ENCODE measurements at regions of chr15 and their contacts with region 1.

Region 1: DNA sequence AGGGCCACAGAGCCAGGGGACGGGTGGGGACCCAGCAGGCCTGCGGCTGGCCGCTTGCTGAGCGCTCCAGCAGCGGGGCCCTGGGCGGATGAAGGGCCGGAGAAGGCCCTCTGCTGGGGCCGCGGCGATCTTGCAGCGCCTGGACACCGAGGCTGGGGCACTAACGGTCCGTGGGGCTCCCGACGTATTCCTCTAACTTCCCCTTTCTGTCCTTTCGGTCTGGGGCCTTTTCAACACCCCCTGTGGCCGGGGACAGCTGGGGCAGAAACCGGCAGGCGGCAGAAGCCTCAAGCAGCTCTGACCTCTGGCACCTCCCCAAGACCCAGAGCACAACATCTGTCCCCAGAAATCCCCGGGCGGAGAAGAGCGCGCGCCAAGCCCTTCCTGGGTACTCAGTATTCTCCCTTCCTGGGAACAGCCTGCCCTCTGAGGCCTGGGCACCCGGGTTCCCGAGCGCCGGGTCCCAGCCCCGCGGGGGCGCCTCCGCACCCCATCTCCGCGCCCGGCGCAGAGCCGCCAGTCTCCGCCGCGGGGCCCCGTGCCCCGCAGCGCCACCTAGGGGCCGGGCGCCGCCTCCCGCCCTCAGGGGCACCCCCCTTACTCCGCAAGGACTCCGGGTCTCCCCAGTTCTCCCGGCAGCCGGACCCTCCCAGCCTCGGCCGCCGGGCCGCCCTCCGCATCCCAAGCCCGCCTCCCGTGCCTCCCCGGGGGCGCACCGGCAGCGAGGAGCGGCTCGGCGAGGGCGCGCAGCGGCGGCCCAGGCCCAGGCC is 582 bp upstream of the SLCO3A1 start:
- DNase-seq: peak; percentile 80
- H3K4me3 Mint-ChIP-seq: peak overlapping the region; percentile 77
- H3K27ac Mint-ChIP-seq: peak overlapping the region; percentile 77
- H3K4me1 Mint-ChIP-seq: peaks cover 58% of the 10 kb centered on the region
- H3K27me3 Mint-ChIP-seq: no peaks in the 10 kb centered on the region

Region 2: GRCh38 chr15:91302588-91303439 is 550.1 kb before region 1 on chr15:
- CTCF ChIA-PET with region 1: interaction called, 22 read pairs
- POLR2A ChIA-PET with region 1: no interaction called
- intact Hi-C with region 1: loop called (anchors 2 kb)
- DNase-seq: peak; percentile 28
- H3K4me3 Mint-ChIP-seq: no peak overlapping the region
- H3K27ac Mint-ChIP-seq: no peak overlapping the region
- H3K4me1 Mint-ChIP-seq: peaks cover 21% of the 10 kb centered on the region
- H3K27me3 Mint-ChIP-seq: peaks cover 10% of the 10 kb centered on the region

Region 3: GRCh38 chr15:91469632-91470567 is 383.0 kb before region 1 on chr15:
- CTCF ChIA-PET with region 1: interaction called, 4 read pairs
- POLR2A ChIA-PET with region 1: no interaction called
- intact Hi-C with region 1: loop called (anchors 1 kb)
- DNase-seq: peak; percentile 87
- H3K4me3 Mint-ChIP-seq: peak overlapping the region; percentile 27
- H3K27ac Mint-ChIP-seq: peak overlapping the region; percentile 83
- H3K4me1 Mint-ChIP-seq: peaks cover 58% of the 10 kb centered on the region
- H3K27me3 Mint-ChIP-seq: no peaks in the 10 kb centered on the region

Region 4: GRCh38 chr15:91908391-91908790 is 55.5 kb after region 1 on chr15:
- CTCF ChIA-PET with region 1: interaction called, 5 read pairs
- POLR2A ChIA-PET with region 1: no interaction called
- intact Hi-C with region 1: loop called (anchors 1 kb)
- DNase-seq: peak; percentile 16
- H3K4me3 Mint-ChIP-seq: no peak overlapping the region
- H3K27ac Mint-ChIP-seq: peak overlapping the region; percentile 59
- H3K4me1 Mint-ChIP-seq: peaks cover 58% of the 10 kb centered on the region
- H3K27me3 Mint-ChIP-seq: no peaks in the 10 kb centered on the region

Region 5: GRCh38 chr15:92011611-92012367 is 158.9 kb after region 1 on chr15:
- CTCF ChIA-PET with region 1: interaction called, 5 read pairs
- POLR2A ChIA-PET with region 1: no interaction called
- intact Hi-C with region 1: loop called (anchors 2 kb)
- DNase-seq: peak; percentile 67
- H3K4me3 Mint-ChIP-seq: peak overlapping the region; percentile 39
- H3K27ac Mint-ChIP-seq: peak overlapping the region; percentile 66
- H3K4me1 Mint-ChIP-seq: peaks cover 71% of the 10 kb centered on the region
- H3K27me3 Mint-ChIP-seq: no peaks in the 10 kb centered on the region

Region 6: DNA sequence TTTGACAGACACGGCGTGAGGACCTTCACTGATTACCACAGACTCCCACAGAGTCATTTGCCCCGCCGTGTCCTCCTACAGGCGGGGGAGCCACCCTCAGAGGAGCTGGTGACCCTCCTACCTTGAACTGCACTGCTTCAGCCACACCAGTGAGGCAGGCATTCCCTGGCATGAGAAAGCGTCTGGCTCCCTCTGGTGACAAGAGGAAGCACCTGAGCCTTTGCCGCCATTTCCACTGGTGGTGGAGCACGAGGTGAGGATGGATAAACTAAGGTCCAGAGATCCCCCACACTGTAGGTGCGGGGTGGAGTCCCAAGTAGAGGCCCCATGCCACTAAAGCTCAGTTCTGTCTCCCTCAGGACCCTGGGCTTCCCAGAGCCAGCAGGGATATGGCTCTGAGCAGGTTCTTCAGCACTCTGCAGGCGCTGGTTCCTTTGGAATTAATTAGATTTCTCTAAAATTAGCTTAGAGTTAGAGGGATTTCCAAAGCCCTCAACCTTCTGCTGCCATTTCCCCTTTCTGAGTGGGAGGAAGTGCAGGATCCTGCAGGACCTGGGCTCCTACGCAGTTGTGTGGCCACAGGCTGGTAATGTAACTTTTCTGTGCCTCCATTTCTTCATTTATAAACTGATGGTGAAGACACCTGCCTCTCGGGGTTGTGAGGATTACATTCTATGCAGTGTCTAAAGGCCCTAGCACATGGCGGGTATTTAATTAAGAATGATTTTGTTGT is 224.6 kb after region 1 on chr15:
- CTCF ChIA-PET with region 1: interaction called, 173 read pairs
- POLR2A ChIA-PET with region 1: interaction called, 6 read pairs
- intact Hi-C with region 1: loop called (anchors 1 kb)
- DNase-seq: peak; percentile 84
- H3K4me3 Mint-ChIP-seq: no peak overlapping the region
- H3K27ac Mint-ChIP-seq: no peak overlapping the region
- H3K4me1 Mint-ChIP-seq: peaks cover 34% of the 10 kb centered on the region
- H3K27me3 Mint-ChIP-seq: no peaks in the 10 kb centered on the region

Region 7: DNA sequence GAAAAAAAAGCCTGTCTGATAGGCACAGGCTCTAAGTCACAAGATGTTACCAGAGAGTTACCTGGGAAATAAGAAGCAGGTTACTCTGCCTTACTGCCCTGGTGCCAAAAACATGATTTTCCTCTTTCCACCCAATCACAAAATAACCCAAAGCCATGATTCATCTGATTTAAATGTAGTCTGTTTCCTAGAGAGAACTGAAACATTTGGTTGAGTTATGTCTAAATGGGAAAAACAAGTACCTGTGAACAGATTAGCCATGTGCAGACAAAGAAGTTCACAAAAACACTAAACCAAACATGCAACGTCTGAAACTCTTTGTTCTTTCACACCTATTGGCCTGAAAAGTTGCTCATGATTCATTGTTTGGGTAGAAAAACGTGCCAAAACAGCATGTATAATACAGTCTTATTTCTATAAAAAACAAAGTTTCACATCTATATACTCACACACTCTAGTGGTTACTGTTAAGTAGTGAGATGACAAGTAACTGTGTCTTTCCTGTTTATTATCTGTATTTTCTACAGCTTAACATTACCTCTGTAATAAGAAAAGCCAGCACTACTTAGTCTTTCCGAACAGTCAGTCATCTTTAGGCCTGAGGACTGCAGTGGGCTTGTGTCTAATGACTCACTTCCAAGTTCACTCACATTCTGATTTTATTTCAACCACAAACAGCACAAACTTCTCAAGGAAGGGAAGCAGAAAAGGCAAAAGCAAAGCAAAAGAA is 772.5 kb after region 1 on chr15:
- CTCF ChIA-PET with region 1: no interaction called
- POLR2A ChIA-PET with region 1: interaction called, 3 read pairs
- intact Hi-C with region 1: loop called (anchors 1 kb)
- DNase-seq: peak; percentile 46
- H3K4me3 Mint-ChIP-seq: peak overlapping the region; percentile 3
- H3K27ac Mint-ChIP-seq: peak overlapping the region; percentile 93
- H3K4me1 Mint-ChIP-seq: peaks cover 39% of the 10 kb centered on the region
- H3K27me3 Mint-ChIP-seq: peaks cover 8% of the 10 kb centered on the region

Measured in activated CD4-positive, alpha-beta memory T cell treated with anti-CD3 and anti-CD28 coated beads for 36 hours (primary cell).